ENCODE measurements at regions of chr5 and their contacts with region 1.

Region 1: GRCh38 chr5:148730943-148731861 is 76.9 kb upstream of the HTR4 start:
- DNase-seq: peak; percentile 34 to 54
- H3K4me3 ChIP-seq: no peak overlapping the region
- H3K27ac ChIP-seq: no peak overlapping the region
- H3K4me1 ChIP-seq: no peaks in the 10 kb centered on the region
- H3K27me3 ChIP-seq: no peaks in the 10 kb centered on the region
- CTCF ChIP-seq: peak in 2 of 3 experiments; percentile 92 to 98; a peak in 3 of 4 replicates
- EP300 ChIP-seq: no peak
- POLR2A ChIP-seq: no peak
- RAD21 ChIP-seq: peak; percentile 94 to 95

Region 2: DNA sequence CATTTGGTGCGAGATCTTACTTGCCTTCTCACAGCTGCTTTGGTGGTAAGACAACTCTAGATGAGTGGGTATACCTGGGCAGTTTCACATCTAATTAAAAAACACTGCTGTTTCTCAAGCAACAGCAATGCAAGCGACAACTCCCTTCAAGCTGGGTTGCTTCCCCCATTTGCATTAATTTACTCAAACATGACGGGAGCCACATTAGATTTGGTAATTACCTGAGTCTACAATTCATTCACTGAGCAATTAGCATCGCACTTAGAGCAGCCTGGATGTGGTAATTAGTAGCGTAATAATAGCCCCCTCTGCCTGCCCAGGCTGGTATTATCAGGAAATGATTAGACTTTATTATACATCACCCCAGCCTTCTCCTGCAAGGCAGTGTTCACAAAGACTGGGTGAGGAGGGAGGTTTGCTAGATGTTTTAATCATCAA is 274.0 kb before region 1 on chr5:
- CTCF ChIA-PET with region 1: interaction called, 56 read pairs
- POLR2A ChIA-PET with region 1: no interaction called
- DNase-seq: no peak
- H3K4me3 ChIP-seq: no peak overlapping the region
- H3K27ac ChIP-seq: no peak overlapping the region
- H3K4me1 ChIP-seq: peaks cover 0 to 10% (median 8%) of the 10 kb centered on the region in 4 experiments; a peak in 4 of 7 replicates
- H3K27me3 ChIP-seq: no peaks in the 10 kb centered on the region
- CTCF ChIP-seq: peak in 2 of 3 experiments; percentile 39 to 52; a peak in 3 of 4 replicates
- EP300 ChIP-seq: no peak
- POLR2A ChIP-seq: no peak
- RAD21 ChIP-seq: peak; percentile 32 to 42; a peak in 3 of 4 replicates

Region 3: GRCh38 chr5:148687427-148687826 is 43.8 kb before region 1 on chr5:
- CTCF ChIA-PET with region 1: interaction called, 36 read pairs
- POLR2A ChIA-PET with region 1: no interaction called
- DNase-seq: peak; percentile 23 to 53
- H3K4me3 ChIP-seq: no peak overlapping the region
- H3K27ac ChIP-seq: no peak overlapping the region
- H3K4me1 ChIP-seq: no peaks in the 10 kb centered on the region
- H3K27me3 ChIP-seq: no peaks in the 10 kb centered on the region
- CTCF ChIP-seq: peak; percentile 35 to 98 (median 95)
- EP300 ChIP-seq: no peak
- POLR2A ChIP-seq: no peak
- RAD21 ChIP-seq: peak; percentile 87

Region 4: GRCh38 chr5:148746826-148747535 is 15.8 kb after region 1 on chr5:
- CTCF ChIA-PET with region 1: interaction called, 74 read pairs
- POLR2A ChIA-PET with region 1: no interaction called
- DNase-seq: no peak
- H3K4me3 ChIP-seq: no peak overlapping the region
- H3K27ac ChIP-seq: no peak overlapping the region
- H3K4me1 ChIP-seq: no peaks in the 10 kb centered on the region
- H3K27me3 ChIP-seq: no peaks in the 10 kb centered on the region
- CTCF ChIP-seq: no peak
- EP300 ChIP-seq: no peak
- POLR2A ChIP-seq: no peak
- RAD21 ChIP-seq: no peak

Region 5: GRCh38 chr5:148839960-148840359 is 108.8 kb after region 1 on chr5:
- CTCF ChIA-PET with region 1: no interaction called
- POLR2A ChIA-PET with region 1: no interaction called
- DNase-seq: no peak
- H3K4me3 ChIP-seq: no peak overlapping the region
- H3K27ac ChIP-seq: no peak overlapping the region
- H3K4me1 ChIP-seq: no peaks in the 10 kb centered on the region
- H3K27me3 ChIP-seq: no peaks in the 10 kb centered on the region
- CTCF ChIP-seq: no peak
- EP300 ChIP-seq: no peak
- POLR2A ChIP-seq: no peak
- RAD21 ChIP-seq: no peak

Region 6: GRCh38 chr5:148882332-148882731 is 151.1 kb after region 1 on chr5:
- CTCF ChIA-PET with region 1: no interaction called
- POLR2A ChIA-PET with region 1: no interaction called
- DNase-seq: no peak
- H3K4me3 ChIP-seq: no peak overlapping the region
- H3K27ac ChIP-seq: no peak overlapping the region
- H3K4me1 ChIP-seq: no peaks in the 10 kb centered on the region
- H3K27me3 ChIP-seq: no peaks in the 10 kb centered on the region
- CTCF ChIP-seq: no peak
- EP300 ChIP-seq: no peak
- POLR2A ChIP-seq: no peak
- RAD21 ChIP-seq: no peak

Region 7: GRCh38 chr5:149005077-149005892 is 274.1 kb after region 1 on chr5:
- CTCF ChIA-PET with region 1: interaction called, 30 read pairs
- POLR2A ChIA-PET with region 1: no interaction called
- DNase-seq: no peak
- H3K4me3 ChIP-seq: no peak overlapping the region
- H3K27ac ChIP-seq: no peak overlapping the region
- H3K4me1 ChIP-seq: no peaks in the 10 kb centered on the region; a peak in 1 of 7 replicates
- H3K27me3 ChIP-seq: no peaks in the 10 kb centered on the region
- CTCF ChIP-seq: no peak
- EP300 ChIP-seq: no peak
- POLR2A ChIP-seq: no peak
- RAD21 ChIP-seq: no peak

Region 8: GRCh38 chr5:149114403-149115312 is 383.5 kb after region 1 on chr5:
- CTCF ChIA-PET with region 1: interaction called, 93 read pairs
- POLR2A ChIA-PET with region 1: no interaction called
- DNase-seq: peak in 1 of 2 experiments; percentile 60
- H3K4me3 ChIP-seq: no peak overlapping the region
- H3K27ac ChIP-seq: no peak overlapping the region
- H3K4me1 ChIP-seq: no peaks in the 10 kb centered on the region
- H3K27me3 ChIP-seq: no peaks in the 10 kb centered on the region
- CTCF ChIP-seq: peak; percentile 63 to 96 (median 84)
- EP300 ChIP-seq: no peak
- POLR2A ChIP-seq: no peak
- RAD21 ChIP-seq: peak; percentile 90 to 97

Measured in H1 (cell line).